Caco-2 (cell line): ENCODE measurements at regions of chr19 and their contacts with region 1.

Region 1: DNA sequence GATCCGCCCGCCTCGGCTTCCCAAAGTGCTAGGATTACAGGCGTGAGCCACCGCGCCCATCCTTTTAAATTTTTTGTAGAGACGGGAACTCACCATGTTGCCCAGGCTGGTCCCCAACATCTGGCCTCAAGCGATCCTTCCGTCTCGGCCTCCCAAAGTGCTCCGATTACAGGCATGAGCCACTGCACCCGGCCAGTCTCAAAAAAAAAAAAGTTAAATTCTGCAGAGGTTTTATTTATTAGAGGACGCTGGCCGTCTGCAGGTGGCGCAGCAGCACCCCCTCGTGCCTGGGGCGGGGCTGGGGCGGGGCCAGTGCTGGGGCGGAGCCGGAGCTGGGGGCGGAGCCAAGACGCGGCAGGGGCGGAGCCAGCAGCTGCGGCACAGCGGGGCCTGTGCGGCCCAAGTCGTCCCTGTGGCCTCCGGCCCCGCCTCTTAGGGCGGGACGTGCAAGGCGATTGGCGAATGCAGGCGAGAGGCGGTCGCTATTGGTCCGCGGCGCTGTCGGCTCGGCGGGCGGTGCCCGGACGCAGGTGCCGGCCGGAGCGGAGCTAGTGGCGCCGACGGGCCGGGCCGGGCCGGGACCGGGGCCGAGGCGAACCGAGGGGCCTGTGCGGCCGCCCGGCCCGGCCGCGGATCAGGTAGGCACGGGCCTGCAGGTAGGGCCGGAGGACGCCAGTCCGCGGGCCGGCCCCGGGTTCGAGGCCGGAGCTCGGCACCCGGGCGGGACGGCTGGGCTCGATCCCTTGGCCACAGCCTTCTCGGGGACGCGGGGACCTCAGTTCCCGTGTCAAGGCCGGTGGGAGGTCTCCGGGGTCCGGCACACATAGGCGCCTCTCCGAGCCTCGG is at the start of gene MARCHF2:
- DNase-seq: peak; percentile 95 to 96
- H3K4me3 ChIP-seq: peak within 1 kb of the TSS; percentile 75
- H3K4me3 Mint-ChIP-seq: peak within 1 kb of the TSS; percentile 53
- H3K27ac Mint-ChIP-seq: no peak within 1 kb of the TSS
- H3K4me1 ChIP-seq: peaks cover 11% of the 10 kb centered on the region
- H3K4me1 Mint-ChIP-seq: no peaks in the 10 kb centered on the region
- H3K27me3 ChIP-seq: no peaks in the 10 kb centered on the region
- H3K27me3 Mint-ChIP-seq: no peaks in the 10 kb centered on the region
- CTCF ChIP-seq: peak; percentile 37 to 72
- total RNA-seq, gene MARCHF2: 13.8 and 15.2 TPM in 2 replicates

Region 2: DNA sequence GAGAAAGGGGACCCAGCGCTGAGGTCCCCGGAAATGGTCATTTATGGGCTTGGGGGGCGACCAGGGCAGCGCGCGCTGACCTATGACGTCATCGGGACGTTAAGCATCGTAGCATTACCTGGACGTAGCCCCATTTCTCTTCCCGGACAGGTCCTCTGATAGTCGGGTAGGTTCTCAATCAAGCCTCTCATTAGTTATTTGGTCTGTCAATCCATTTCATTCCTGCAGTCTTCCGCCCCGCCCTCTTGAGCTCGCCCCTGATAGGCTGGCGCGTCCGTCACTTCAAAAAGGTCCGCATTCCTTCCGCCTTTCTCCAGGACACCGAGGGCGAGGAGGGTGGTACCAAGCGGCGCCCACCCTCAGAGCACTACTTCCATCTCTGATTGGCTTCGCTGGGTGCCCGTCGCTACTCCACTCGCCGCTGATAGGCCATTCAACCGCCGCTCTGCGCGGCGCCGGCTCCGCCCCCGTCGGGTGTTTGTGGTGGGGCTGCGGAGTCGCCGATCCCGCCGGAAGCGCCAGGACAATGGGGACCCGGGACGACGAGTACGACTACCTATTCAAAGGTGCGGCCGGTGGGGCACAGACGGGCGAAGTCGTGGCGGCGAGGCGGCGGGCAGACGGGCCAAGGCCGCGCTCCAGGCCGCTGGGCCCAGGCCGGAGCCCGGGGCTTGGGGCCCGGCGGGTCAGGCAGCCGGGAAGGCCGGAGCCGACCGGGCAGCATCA is 23.0 kb before region 1 on chr19 and contains the start of gene RAB11B:
- CTCF ChIA-PET with region 1: interaction called, 13 read pairs
- POLR2A ChIA-PET with region 1: interaction called, 6 read pairs
- intact Hi-C with region 1: no loop called
- DNase-seq: peak; percentile 99
- H3K4me3 ChIP-seq: peak within 1 kb of the TSS; percentile 86
- H3K4me3 Mint-ChIP-seq: peak within 1 kb of the TSS; percentile 81
- H3K27ac Mint-ChIP-seq: peak within 1 kb of the TSS; percentile 95
- H3K4me1 ChIP-seq: peaks cover 18% of the 10 kb centered on the region; the same call in 1 of the 2 replicates
- H3K4me1 Mint-ChIP-seq: peaks cover 8% of the 10 kb centered on the region
- H3K27me3 ChIP-seq: no peaks in the 10 kb centered on the region
- H3K27me3 Mint-ChIP-seq: no peaks in the 10 kb centered on the region
- CTCF ChIP-seq: no peak
- total RNA-seq, gene RAB11B: 86.3 and 91.3 TPM in 2 replicates

Region 3: GRCh38 chr19:8444645-8445487 is 31.9 kb after region 1 on chr19 and contains the start of gene HNRNPM:
- CTCF ChIA-PET with region 1: interaction called, 12 read pairs
- POLR2A ChIA-PET with region 1: interaction called, 9 read pairs
- intact Hi-C with region 1: no loop called
- DNase-seq: peak; percentile 98 to 99
- H3K4me3 ChIP-seq: peak within 1 kb of the TSS; percentile 81
- H3K4me3 Mint-ChIP-seq: peak within 1 kb of the TSS; percentile 94
- H3K27ac Mint-ChIP-seq: peak within 1 kb of the TSS; percentile 98
- H3K4me1 ChIP-seq: peaks cover 15% of the 10 kb centered on the region
- H3K4me1 Mint-ChIP-seq: peaks cover 8% of the 10 kb centered on the region
- H3K27me3 ChIP-seq: no peaks in the 10 kb centered on the region
- H3K27me3 Mint-ChIP-seq: no peaks in the 10 kb centered on the region
- CTCF ChIP-seq: no peak
- total RNA-seq, gene HNRNPM: 271 and 286 TPM in 2 replicates

Region 4: GRCh38 chr19:8505680-8506401 is 92.8 kb after region 1 on chr19:
- CTCF ChIA-PET with region 1: interaction called, 19 read pairs
- POLR2A ChIA-PET with region 1: interaction called, 5 read pairs
- intact Hi-C with region 1: loop called (anchors 5 kb)
- DNase-seq: peak; percentile 78 to 89
- H3K4me3 ChIP-seq: peak overlapping the region; percentile 67
- H3K4me3 Mint-ChIP-seq: peak overlapping the region; percentile 91
- H3K27ac Mint-ChIP-seq: peak overlapping the region; percentile 82
- H3K4me1 ChIP-seq: 0 out of 2 replicates have a peak, but pooled peaks cover 3% of the 10 kb centered on the region
- H3K4me1 Mint-ChIP-seq: no peaks in the 10 kb centered on the region
- H3K27me3 ChIP-seq: no peaks in the 10 kb centered on the region
- H3K27me3 Mint-ChIP-seq: no peaks in the 10 kb centered on the region
- CTCF ChIP-seq: peak; percentile 72 to 91

Region 5: GRCh38 chr19:8526345-8527067 is 113.5 kb after region 1 on chr19:
- CTCF ChIA-PET with region 1: interaction called, 12 read pairs
- POLR2A ChIA-PET with region 1: no interaction called
- intact Hi-C with region 1: no loop called
- DNase-seq: peak; percentile 94
- H3K4me3 ChIP-seq: peak overlapping the region; percentile 86
- H3K4me3 Mint-ChIP-seq: no peak overlapping the region
- H3K27ac Mint-ChIP-seq: no peak overlapping the region
- H3K4me1 ChIP-seq: peaks cover 2% of the 10 kb centered on the region; the same call in 1 of the 2 replicates
- H3K4me1 Mint-ChIP-seq: peaks cover 7% of the 10 kb centered on the region
- H3K27me3 ChIP-seq: no peaks in the 10 kb centered on the region
- H3K27me3 Mint-ChIP-seq: no peaks in the 10 kb centered on the region
- CTCF ChIP-seq: no peak

Region 6: DNA sequence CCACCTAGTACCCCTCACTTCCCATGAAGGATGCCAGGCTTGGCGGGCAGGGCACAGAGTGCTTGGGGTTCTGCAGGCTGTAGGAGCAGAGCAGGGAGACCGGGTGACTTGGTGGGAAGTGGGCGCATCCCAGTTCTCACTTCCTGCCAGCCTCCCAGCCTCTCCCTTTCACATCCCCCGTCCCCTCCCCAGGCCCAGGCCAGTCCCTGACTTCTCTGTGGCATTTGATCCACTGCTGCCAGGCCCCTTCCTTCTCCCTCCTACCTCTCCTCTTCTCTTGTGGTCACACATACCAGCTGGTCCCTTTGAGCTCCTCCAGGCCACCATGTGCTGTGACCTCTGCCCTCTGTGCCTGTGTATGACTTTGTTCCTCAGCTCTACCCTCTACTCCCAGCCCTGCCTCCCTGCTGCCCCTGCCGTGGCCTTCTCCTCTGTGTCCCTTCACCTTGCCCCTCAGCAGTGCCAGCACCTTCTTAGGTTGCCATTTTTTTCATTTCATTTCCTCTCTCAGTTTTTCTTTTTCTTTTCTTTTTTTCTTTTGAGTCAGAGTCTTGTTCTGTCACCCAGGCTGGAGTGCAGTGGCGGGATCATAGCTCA is 144.7 kb after region 1 on chr19:
- CTCF ChIA-PET with region 1: no interaction called
- POLR2A ChIA-PET with region 1: no interaction called
- intact Hi-C with region 1: no loop called
- DNase-seq: no peak
- H3K4me3 ChIP-seq: no peak overlapping the region
- H3K4me3 Mint-ChIP-seq: no peak overlapping the region
- H3K27ac Mint-ChIP-seq: no peak overlapping the region
- H3K4me1 ChIP-seq: no peaks in the 10 kb centered on the region
- H3K4me1 Mint-ChIP-seq: peaks cover 7% of the 10 kb centered on the region
- H3K27me3 ChIP-seq: no peaks in the 10 kb centered on the region
- H3K27me3 Mint-ChIP-seq: no peaks in the 10 kb centered on the region
- CTCF ChIP-seq: no peak